ENCODE measurements at regions of chr16 and their contacts with region 1.

Region 1: GRCh38 chr16:81737885-81738786 is 41.0 kb upstream of the PLCG2 start:
- DNase-seq: peak; percentile 94
- H3K4me3 ChIP-seq: peak overlapping the region in 1 of 2 donors; percentile 17
- H3K27ac ChIP-seq: peak overlapping the region; percentile 35 to 58
- H3K4me1 ChIP-seq: no peaks in the 10 kb centered on the region
- H3K27me3 ChIP-seq: no peaks in the 10 kb centered on the region
- CTCF ChIP-seq: peak; percentile 77 to 95 (median 92)
- POLR2A ChIP-seq: peak; percentile 15

Region 2: GRCh38 chr16:81204798-81205680 is 533.1 kb before region 1 on chr16:
- intact Hi-C with region 1: loop called (anchors 10 kb)
- DNase-seq: no peak
- H3K4me3 ChIP-seq: no peak overlapping the region
- H3K27ac ChIP-seq: no peak overlapping the region
- H3K4me1 ChIP-seq: no peaks in the 10 kb centered on the region
- H3K27me3 ChIP-seq: no peaks in the 10 kb centered on the region
- CTCF ChIP-seq: peak; percentile 25 to 68 (median 42)
- POLR2A ChIP-seq: no peak

Region 3: GRCh38 chr16:81403616-81404373 is 334.3 kb before region 1 on chr16:
- intact Hi-C with region 1: loop called (anchors 5 kb)
- DNase-seq: peak; percentile 82
- H3K4me3 ChIP-seq: no peak overlapping the region
- H3K27ac ChIP-seq: no peak overlapping the region
- H3K4me1 ChIP-seq: no peaks in the 10 kb centered on the region
- H3K27me3 ChIP-seq: no peaks in the 10 kb centered on the region
- CTCF ChIP-seq: peak; percentile 92 to 98 (median 96)
- POLR2A ChIP-seq: no peak

Region 4: DNA sequence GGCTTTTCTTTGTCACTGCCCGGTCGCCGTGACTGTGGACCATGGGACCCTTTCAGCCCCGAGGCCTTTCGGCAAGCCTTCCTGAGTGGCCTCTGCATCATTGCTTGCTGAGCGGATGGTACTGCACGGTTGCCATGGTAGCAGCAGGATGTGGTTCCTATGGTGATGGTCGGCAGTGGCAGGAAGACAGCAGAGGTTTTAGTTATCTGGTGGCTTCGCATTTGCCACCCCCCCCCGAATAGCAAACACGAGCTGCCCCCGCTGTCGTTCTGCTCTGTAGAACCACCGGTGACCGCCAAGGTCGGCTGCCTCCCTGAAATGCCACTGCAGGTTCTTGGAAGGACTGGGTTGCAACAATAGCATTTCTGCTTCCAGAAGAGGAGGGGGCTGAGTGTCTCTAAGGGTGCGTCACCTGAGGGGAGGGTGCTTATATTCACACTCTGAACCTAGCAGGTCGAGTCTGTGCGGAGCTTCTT is 216.9 kb before region 1 on chr16:
- intact Hi-C with region 1: no loop called
- DNase-seq: no peak
- H3K4me3 ChIP-seq: no peak overlapping the region
- H3K27ac ChIP-seq: no peak overlapping the region
- H3K4me1 ChIP-seq: no peaks in the 10 kb centered on the region
- H3K27me3 ChIP-seq: no peaks in the 10 kb centered on the region
- CTCF ChIP-seq: no peak
- POLR2A ChIP-seq: no peak